K562 (cell line): ENCODE measurements at regions of chr12 and their contacts with region 1.

Region 1: DNA sequence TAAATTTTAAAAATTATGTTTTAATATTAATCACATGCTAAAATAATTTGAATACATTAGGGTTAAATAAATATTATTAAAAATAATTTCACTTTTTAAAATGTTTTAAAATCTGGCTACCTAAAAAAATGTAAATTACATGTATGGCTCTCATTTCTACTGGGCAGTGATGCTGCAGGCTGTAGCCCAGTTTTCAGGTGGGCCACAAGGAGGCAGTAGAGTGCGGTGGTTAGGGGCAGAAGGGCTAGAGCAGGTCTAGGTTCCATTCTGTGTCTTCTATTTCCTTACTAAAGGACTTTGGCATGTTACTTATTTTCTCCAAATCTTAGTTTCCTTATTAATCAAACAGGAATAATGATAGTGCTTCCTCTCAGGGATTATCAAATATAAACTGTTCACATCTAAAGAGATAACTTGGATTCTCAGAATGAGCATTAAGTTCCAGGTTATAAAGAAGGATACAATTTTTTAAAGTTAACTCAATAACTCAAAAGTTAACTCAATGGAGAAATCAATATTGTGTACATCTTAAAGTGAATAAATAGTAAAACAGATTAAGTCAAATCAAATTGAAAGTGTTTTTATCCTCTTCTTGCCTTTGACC is 54.9 kb upstream of the OVCH1 start:
- DNase-seq: peak; percentile 47 to 70 (median 62)
- ATAC-seq: peak; percentile 92
- H3K4me3 ChIP-seq: no peak overlapping the region
- H3K27ac ChIP-seq: no peak overlapping the region
- H3K4me1 ChIP-seq: no peaks in the 10 kb centered on the region
- H3K27me3 ChIP-seq: no peaks in the 10 kb centered on the region
- CTCF ChIP-seq: peak; percentile 72 to 76 (median 74)
- EP300 ChIP-seq: no peak
- POLR2A ChIP-seq: no peak
- RAD21 ChIP-seq: peak; percentile 69 to 75

Region 2: GRCh38 chr12:29463198-29463597 is 89.2 kb before region 1 on chr12:
- CTCF ChIA-PET with region 1: no interaction called
- POLR2A ChIA-PET with region 1: no interaction called
- in situ Hi-C with region 1: no loop called
- intact Hi-C with region 1: no loop called
- DNase-seq: no peak
- ATAC-seq: no peak
- H3K4me3 ChIP-seq: no peak overlapping the region
- H3K27ac ChIP-seq: no peak overlapping the region
- H3K4me1 ChIP-seq: no peaks in the 10 kb centered on the region
- H3K27me3 ChIP-seq: no peaks in the 10 kb centered on the region
- CTCF ChIP-seq: no peak
- EP300 ChIP-seq: no peak
- POLR2A ChIP-seq: no peak
- RAD21 ChIP-seq: no peak

Region 3: GRCh38 chr12:29569132-29569757 is 16.8 kb after region 1 on chr12:
- CTCF ChIA-PET with region 1: no interaction called
- POLR2A ChIA-PET with region 1: no interaction called
- in situ Hi-C with region 1: no loop called
- intact Hi-C with region 1: no loop called
- DNase-seq: no peak
- ATAC-seq: no peak
- H3K4me3 ChIP-seq: no peak overlapping the region
- H3K27ac ChIP-seq: no peak overlapping the region
- H3K4me1 ChIP-seq: no peaks in the 10 kb centered on the region
- H3K27me3 ChIP-seq: no peaks in the 10 kb centered on the region; a peak in 1 of 5 replicates
- CTCF ChIP-seq: no peak
- EP300 ChIP-seq: no peak
- POLR2A ChIP-seq: no peak
- RAD21 ChIP-seq: no peak

Region 4: DNA sequence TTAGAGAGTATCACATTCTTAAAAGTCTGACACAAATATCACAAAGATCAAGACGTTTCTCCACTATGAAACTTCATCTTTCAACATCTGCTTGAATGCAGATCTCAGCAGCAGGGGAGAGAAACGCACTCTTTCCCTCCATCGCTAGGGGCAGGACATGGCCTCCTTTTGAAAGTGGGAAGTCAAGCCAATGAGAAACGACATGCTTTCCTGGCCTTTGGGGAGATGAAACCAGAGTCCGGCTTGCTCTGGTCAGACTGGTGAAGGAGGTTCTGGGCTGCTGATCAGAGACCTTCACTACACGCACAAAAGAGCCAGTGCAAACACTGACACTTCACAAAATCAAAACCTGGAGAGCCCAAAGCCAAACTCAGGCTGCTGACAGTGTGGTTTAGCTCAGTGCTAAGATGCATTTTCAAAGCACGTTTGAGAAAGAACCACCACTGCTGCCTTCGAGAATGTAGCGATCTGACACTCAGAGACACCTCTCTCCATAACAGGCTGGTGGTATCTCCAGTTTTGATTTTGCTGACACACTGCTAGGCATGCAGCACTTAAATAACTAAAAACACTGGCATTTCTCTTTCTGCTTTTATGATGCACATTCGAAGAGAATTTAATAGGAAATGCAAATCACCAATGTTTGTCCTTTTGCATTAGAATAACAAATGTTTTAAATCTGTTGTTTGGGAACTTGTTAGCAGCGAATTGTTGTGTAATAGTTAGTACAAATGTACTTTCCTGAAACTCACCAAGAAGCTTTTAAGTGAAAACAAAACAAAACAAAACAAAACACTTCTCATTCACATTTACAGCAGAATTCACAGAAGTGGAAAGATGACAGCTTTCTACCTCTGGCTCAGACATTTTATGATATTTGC is 39.0 kb after region 1 on chr12:
- CTCF ChIA-PET with region 1: no interaction called
- POLR2A ChIA-PET with region 1: no interaction called
- in situ Hi-C with region 1: no loop called
- intact Hi-C with region 1: no loop called
- DNase-seq: peak in 2 of 4 experiments; percentile 5 to 9
- ATAC-seq: peak; percentile 67
- H3K4me3 ChIP-seq: no peak overlapping the region
- H3K27ac ChIP-seq: no peak overlapping the region
- H3K4me1 ChIP-seq: no peaks in the 10 kb centered on the region
- H3K27me3 ChIP-seq: no peaks in the 10 kb centered on the region
- CTCF ChIP-seq: peak; percentile 11 to 33 (median 23); a peak in 3 of 6 replicates
- EP300 ChIP-seq: no peak
- POLR2A ChIP-seq: no peak
- RAD21 ChIP-seq: 0 out of 4 replicates have a peak, but pooled peaks of 1 of the 2 experiments have one; percentile 16

Region 5: GRCh38 chr12:30134229-30134628 is 581.8 kb after region 1 on chr12:
- CTCF ChIA-PET with region 1: no interaction called
- POLR2A ChIA-PET with region 1: no interaction called
- in situ Hi-C with region 1: no loop called
- intact Hi-C with region 1: loop called (anchors 2 kb)
- DNase-seq: peak in 3 of 4 experiments; percentile 15 to 28 (median 25)
- ATAC-seq: peak; percentile 68
- H3K4me3 ChIP-seq: no peak overlapping the region
- H3K27ac ChIP-seq: no peak overlapping the region
- H3K4me1 ChIP-seq: no peaks in the 10 kb centered on the region
- H3K27me3 ChIP-seq: no peaks in the 10 kb centered on the region
- CTCF ChIP-seq: peak; percentile 28 to 39 (median 36); a peak in 3 of 6 replicates
- EP300 ChIP-seq: no peak
- POLR2A ChIP-seq: no peak
- RAD21 ChIP-seq: no peak

Region 6: DNA sequence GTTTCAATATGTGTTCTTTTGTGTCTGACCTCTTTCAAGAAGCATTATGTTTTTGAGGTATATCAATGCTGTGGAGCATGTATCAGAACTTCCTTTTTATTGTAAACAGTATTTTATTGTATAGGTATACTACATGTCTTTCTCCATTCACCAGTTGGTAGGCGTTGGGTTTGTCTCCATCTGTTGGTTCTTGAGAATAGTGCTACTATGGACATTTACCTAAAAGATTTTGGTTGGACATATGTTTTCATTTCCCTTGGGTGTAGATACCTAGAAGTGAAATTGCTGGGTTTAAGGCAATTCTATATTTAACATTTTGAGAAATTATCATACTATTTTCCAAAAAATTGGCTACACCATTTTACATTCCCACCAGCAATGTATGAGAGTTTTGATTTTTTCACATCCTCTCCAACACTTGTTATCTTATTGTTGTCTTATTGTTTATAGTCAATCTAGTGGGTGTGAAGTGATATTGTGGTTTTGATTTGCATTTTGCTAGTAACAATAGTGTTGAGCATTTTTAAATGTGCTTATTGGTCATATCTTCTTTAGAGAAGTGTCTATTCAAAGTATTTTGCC is 734.0 kb after region 1 on chr12:
- CTCF ChIA-PET with region 1: no interaction called
- POLR2A ChIA-PET with region 1: no interaction called
- in situ Hi-C with region 1: no loop called
- intact Hi-C with region 1: loop called (anchors 5 kb)
- DNase-seq: peak in 1 of 4 experiments; percentile 9
- ATAC-seq: no peak
- H3K4me3 ChIP-seq: no peak overlapping the region
- H3K27ac ChIP-seq: no peak overlapping the region
- H3K4me1 ChIP-seq: no peaks in the 10 kb centered on the region
- H3K27me3 ChIP-seq: no peaks in the 10 kb centered on the region
- CTCF ChIP-seq: peak in 1 of 3 experiments; percentile 34; a peak in 2 of 6 replicates
- EP300 ChIP-seq: no peak
- POLR2A ChIP-seq: no peak
- RAD21 ChIP-seq: peak in 1 of 2 experiments; percentile 41; a peak in 1 of 4 replicates